ENCODE measurements at regions of chr2 and their contacts with region 1.

Region 1: GRCh38 chr2:190679813-190680591 is 31.1 kb downstream of the NAB1 start:
- DNase-seq: peak; percentile 54
- ATAC-seq: peak; percentile 81
- H3K4me3 ChIP-seq: peak overlapping the region; percentile 6; the same call in 1 of the 2 replicates
- H3K27ac ChIP-seq: peak overlapping the region; percentile 87
- H3K4me1 ChIP-seq: peaks cover 43% of the 10 kb centered on the region
- H3K27me3 ChIP-seq: no peaks in the 10 kb centered on the region
- CTCF ChIP-seq: peak; percentile 65 to 85 (median 82)
- EP300 ChIP-seq: 0 out of 4 replicates have a peak, but pooled peaks of 1 of the 2 experiments have one; percentile 42
- POLR2A ChIP-seq: peak; percentile 86
- RAD21 ChIP-seq: peak; percentile 84

Region 2: GRCh38 chr2:190511104-190511503 is 168.9 kb before region 1 on chr2:
- CTCF ChIA-PET with region 1: interaction called, 33 read pairs
- POLR2A ChIA-PET with region 1: interaction called, 3 read pairs
- RAD21 ChIA-PET with region 1: interaction called, 25 read pairs
- SMC1A ChIA-PET with region 1: interaction called, 65 read pairs
- in situ Hi-C with region 1: no loop called
- intact Hi-C with region 1: no loop called
- DNase-seq: no peak
- ATAC-seq: peak; percentile 31; the same call in 1 of the 3 replicates
- H3K4me3 ChIP-seq: no peak overlapping the region
- H3K27ac ChIP-seq: no peak overlapping the region
- H3K4me1 ChIP-seq: peaks cover 4% of the 10 kb centered on the region
- H3K27me3 ChIP-seq: no peaks in the 10 kb centered on the region
- CTCF ChIP-seq: peak; percentile 21 to 49 (median 27); a peak in 4 of 6 replicates
- EP300 ChIP-seq: no peak
- POLR2A ChIP-seq: no peak
- RAD21 ChIP-seq: peak; percentile 76

Region 3: GRCh38 chr2:190583507-190584337 is 96.3 kb before region 1 on chr2:
- CTCF ChIA-PET with region 1: interaction called, 9 read pairs
- POLR2A ChIA-PET with region 1: interaction called, 7 read pairs
- RAD21 ChIA-PET with region 1: interaction called, 44 read pairs
- SMC1A ChIA-PET with region 1: interaction called, 40 read pairs
- in situ Hi-C with region 1: no loop called
- intact Hi-C with region 1: no loop called
- DNase-seq: peak; percentile 21
- ATAC-seq: peak; percentile 85
- H3K4me3 ChIP-seq: 0 out of 2 replicates have a peak overlapping the region, but pooled peaks have one; percentile 27
- H3K27ac ChIP-seq: peak overlapping the region; percentile 72
- H3K4me1 ChIP-seq: peaks cover 18% of the 10 kb centered on the region
- H3K27me3 ChIP-seq: no peaks in the 10 kb centered on the region
- CTCF ChIP-seq: no peak
- EP300 ChIP-seq: peak; percentile 30 to 62; a peak in 3 of 4 replicates
- POLR2A ChIP-seq: no peak
- RAD21 ChIP-seq: no peak

Region 4: GRCh38 chr2:190648289-190649034 is 31.5 kb before region 1 on chr2:
- CTCF ChIA-PET with region 1: interaction called, 143 read pairs
- POLR2A ChIA-PET with region 1: interaction called, 111 read pairs
- RAD21 ChIA-PET with region 1: interaction called, 233 read pairs
- SMC1A ChIA-PET with region 1: interaction called, 253 read pairs
- in situ Hi-C with region 1: no loop called
- intact Hi-C with region 1: loop called (anchors 1 kb)
- DNase-seq: peak; percentile 17
- ATAC-seq: peak; percentile 75
- H3K4me3 ChIP-seq: peak overlapping the region; percentile 69
- H3K27ac ChIP-seq: peak overlapping the region; percentile 59
- H3K4me1 ChIP-seq: no peaks in the 10 kb centered on the region
- H3K27me3 ChIP-seq: no peaks in the 10 kb centered on the region
- CTCF ChIP-seq: no peak
- EP300 ChIP-seq: peak in 1 of 2 experiments; percentile 58; a peak in 1 of 4 replicates
- POLR2A ChIP-seq: peak; percentile 19; the same call in 1 of the 2 replicates
- RAD21 ChIP-seq: 0 out of 2 replicates have a peak, but pooled peaks have one; percentile 10

Region 5: GRCh38 chr2:190707726-190708125 is 27.7 kb after region 1 on chr2:
- CTCF ChIA-PET with region 1: interaction called, 283 read pairs
- POLR2A ChIA-PET with region 1: interaction called, 10 read pairs
- RAD21 ChIA-PET with region 1: interaction called, 117 read pairs
- SMC1A ChIA-PET with region 1: interaction called, 385 read pairs
- in situ Hi-C with region 1: no loop called
- intact Hi-C with region 1: no loop called
- DNase-seq: no peak
- ATAC-seq: peak; percentile 66
- H3K4me3 ChIP-seq: no peak overlapping the region
- H3K27ac ChIP-seq: no peak overlapping the region
- H3K4me1 ChIP-seq: peaks cover 30% of the 10 kb centered on the region
- H3K27me3 ChIP-seq: no peaks in the 10 kb centered on the region
- CTCF ChIP-seq: no peak
- EP300 ChIP-seq: no peak
- POLR2A ChIP-seq: no peak
- RAD21 ChIP-seq: no peak

Region 6: GRCh38 chr2:190781604-190782198 is 101.7 kb after region 1 on chr2:
- CTCF ChIA-PET with region 1: interaction called, 16 read pairs
- POLR2A ChIA-PET with region 1: no interaction called
- RAD21 ChIA-PET with region 1: interaction called, 15 read pairs
- SMC1A ChIA-PET with region 1: interaction called, 11 read pairs
- in situ Hi-C with region 1: no loop called
- intact Hi-C with region 1: no loop called
- DNase-seq: peak; percentile 12
- ATAC-seq: peak; percentile 86
- H3K4me3 ChIP-seq: no peak overlapping the region
- H3K27ac ChIP-seq: no peak overlapping the region
- H3K4me1 ChIP-seq: no peaks in the 10 kb centered on the region
- H3K27me3 ChIP-seq: no peaks in the 10 kb centered on the region
- CTCF ChIP-seq: peak; percentile 29 to 55 (median 54); a peak in 4 of 6 replicates
- EP300 ChIP-seq: no peak
- POLR2A ChIP-seq: no peak
- RAD21 ChIP-seq: peak; percentile 85

Region 7: DNA sequence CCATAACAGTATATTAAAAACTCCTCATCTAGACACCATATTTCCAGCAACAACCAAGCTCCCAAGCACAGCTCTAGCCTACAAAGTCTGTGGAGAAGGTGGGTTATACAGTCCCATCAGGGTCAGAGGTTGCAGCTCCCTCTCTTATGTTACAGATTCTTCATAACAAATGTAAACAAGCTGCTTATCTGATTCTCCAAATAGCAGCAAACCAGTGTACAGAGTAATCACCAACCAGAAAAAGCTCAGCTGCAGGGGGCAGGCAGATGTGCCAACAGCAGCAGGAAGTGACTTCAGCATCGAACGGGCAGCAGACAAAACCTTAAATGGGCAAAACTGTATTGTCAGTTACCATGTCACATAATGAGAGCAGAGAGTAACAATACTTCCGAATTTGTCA is 945.0 kb after region 1 on chr2:
- CTCF ChIA-PET with region 1: no interaction called
- POLR2A ChIA-PET with region 1: no interaction called
- RAD21 ChIA-PET with region 1: no interaction called
- SMC1A ChIA-PET with region 1: no interaction called
- in situ Hi-C with region 1: no loop called
- intact Hi-C with region 1: no loop called
- DNase-seq: no peak
- ATAC-seq: peak; percentile 69
- H3K4me3 ChIP-seq: no peak overlapping the region
- H3K27ac ChIP-seq: no peak overlapping the region
- H3K4me1 ChIP-seq: no peaks in the 10 kb centered on the region
- H3K27me3 ChIP-seq: no peaks in the 10 kb centered on the region
- CTCF ChIP-seq: no peak
- EP300 ChIP-seq: no peak
- POLR2A ChIP-seq: no peak
- RAD21 ChIP-seq: no peak

Measured in GM12878 (cell line).